ENCODE measurements at regions of chr2 and their contacts with region 1.

Region 1: GRCh38 chr2:43293744-43294695 is 67.6 kb upstream of the ZFP36L2 start:
- DNase-seq: peak; percentile 83
- H3K4me3 ChIP-seq: no peak overlapping the region
- H3K27ac ChIP-seq: peak overlapping the region; percentile 57
- H3K4me1 ChIP-seq: peaks cover 13% of the 10 kb centered on the region
- H3K27me3 ChIP-seq: no peaks in the 10 kb centered on the region
- CTCF ChIP-seq: no peak
- POLR2A ChIP-seq: no peak

Region 2: GRCh38 chr2:43276962-43277391 is 17.0 kb before region 1 on chr2:
- CTCF ChIA-PET with region 1: interaction called, 8 read pairs
- POLR2A ChIA-PET with region 1: interaction called, 3 read pairs
- dilution Hi-C with region 1: no loop called
- intact Hi-C with region 1: loop called (anchors 2 kb)
- DNase-seq: peak; percentile 28
- H3K4me3 ChIP-seq: no peak overlapping the region
- H3K27ac ChIP-seq: no peak overlapping the region
- H3K4me1 ChIP-seq: peaks cover 15% of the 10 kb centered on the region
- H3K27me3 ChIP-seq: no peaks in the 10 kb centered on the region
- CTCF ChIP-seq: no peak
- POLR2A ChIP-seq: no peak